Activated B cell treated with CpG ODN at 0.5 μM for 24 hours (primary cell): ENCODE measurements at regions of chr5 and their contacts with region 1.

Region 1: DNA sequence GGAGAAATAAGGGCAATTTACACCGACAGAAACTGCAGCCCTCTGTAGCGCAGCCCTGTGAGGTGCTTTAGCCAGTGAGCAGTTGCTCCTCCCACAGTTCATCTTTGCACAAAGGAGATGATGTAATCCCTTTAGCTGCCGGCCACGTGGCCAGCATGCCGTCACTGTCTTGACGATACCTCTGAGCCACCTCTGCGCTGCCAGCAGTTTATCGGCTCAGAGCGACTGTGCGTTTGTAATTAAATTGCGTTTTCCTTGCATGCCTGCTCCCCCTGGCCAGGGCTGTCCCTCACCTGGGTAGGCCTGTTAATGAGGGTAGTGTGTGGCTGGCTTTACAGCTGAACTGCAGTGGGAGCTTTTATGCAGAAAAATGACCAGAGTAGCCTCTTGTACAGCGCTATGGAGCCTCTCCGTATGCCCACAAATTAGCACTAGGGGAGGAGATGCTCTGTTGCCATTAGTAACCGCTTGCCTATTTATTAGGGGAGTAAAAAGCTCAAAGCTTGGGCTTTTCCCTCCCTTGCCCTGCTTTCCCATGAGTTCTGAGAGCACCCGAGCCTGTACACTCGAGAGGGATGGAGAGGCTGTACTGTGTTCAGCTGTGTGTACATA is 107.0 kb downstream of the TRIO start:
- DNase-seq: no peak
- ATAC-seq: peak; percentile 22
- H3K4me3 Mint-ChIP-seq: peak overlapping the region; percentile 55
- H3K27ac Mint-ChIP-seq: peak overlapping the region; percentile 87
- H3K4me1 Mint-ChIP-seq: peaks cover 89% of the 10 kb centered on the region
- H3K27me3 Mint-ChIP-seq: no peaks in the 10 kb centered on the region
- CTCF ChIP-seq: no peak

Region 2: GRCh38 chr5:14234219-14234618 is 16.0 kb before region 1 on chr5:
- CTCF ChIA-PET with region 1: no interaction called
- POLR2A ChIA-PET with region 1: interaction called, 6 read pairs
- intact Hi-C with region 1: loop called (anchors 2 kb)
- DNase-seq: no peak
- ATAC-seq: no peak
- H3K4me3 Mint-ChIP-seq: no peak overlapping the region
- H3K27ac Mint-ChIP-seq: peak overlapping the region; percentile 32
- H3K4me1 Mint-ChIP-seq: peaks cover 63% of the 10 kb centered on the region
- H3K27me3 Mint-ChIP-seq: no peaks in the 10 kb centered on the region
- CTCF ChIP-seq: no peak

Region 3: DNA sequence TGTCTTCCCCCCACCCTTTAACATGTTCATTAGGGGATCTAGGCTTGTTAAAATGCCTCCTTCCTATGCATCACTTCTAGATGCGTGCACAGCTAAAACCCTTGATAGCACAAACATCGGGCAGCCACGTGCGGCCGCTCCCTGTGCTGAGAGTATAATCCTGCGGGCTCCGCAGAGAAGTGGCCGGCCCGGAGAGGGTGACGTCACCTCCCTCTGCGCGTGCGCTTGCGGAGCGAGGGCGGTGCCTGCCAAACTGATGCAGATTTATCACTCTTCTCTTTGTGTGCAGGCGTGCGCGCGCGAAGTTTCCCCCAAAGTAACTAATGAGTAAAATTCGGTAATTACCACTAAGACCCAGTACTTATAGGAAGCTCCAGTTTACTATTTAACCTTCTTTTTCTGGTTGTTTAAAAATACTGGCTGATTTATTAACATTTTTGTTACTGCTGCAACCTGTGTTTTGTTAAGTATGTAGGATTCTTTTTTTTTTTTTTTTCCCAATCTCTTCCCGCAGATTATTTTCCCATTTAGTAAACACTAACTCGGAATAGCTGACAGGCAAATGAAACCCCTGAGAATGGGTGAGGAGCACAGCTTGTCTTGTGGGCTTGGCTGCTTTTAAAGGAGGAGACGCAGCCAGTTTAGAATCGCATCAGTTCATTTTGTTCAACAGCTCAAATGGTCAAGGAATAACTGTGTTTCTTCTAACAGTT is 14.6 kb after region 1 on chr5:
- CTCF ChIA-PET with region 1: interaction called, 7 read pairs
- POLR2A ChIA-PET with region 1: interaction called, 9 read pairs
- intact Hi-C with region 1: loop called (anchors 2 kb)
- DNase-seq: peak; percentile 79
- ATAC-seq: peak; percentile 98
- H3K4me3 Mint-ChIP-seq: peak overlapping the region; percentile 81
- H3K27ac Mint-ChIP-seq: peak overlapping the region; percentile 69
- H3K4me1 Mint-ChIP-seq: peaks cover 78% of the 10 kb centered on the region
- H3K27me3 Mint-ChIP-seq: no peaks in the 10 kb centered on the region
- CTCF ChIP-seq: no peak

Region 4: GRCh38 chr5:14286574-14287421 is 36.6 kb after region 1 on chr5:
- CTCF ChIA-PET with region 1: no interaction called
- POLR2A ChIA-PET with region 1: interaction called, 6 read pairs
- intact Hi-C with region 1: loop called (anchors 2 kb)
- DNase-seq: peak; percentile 26
- ATAC-seq: peak; percentile 98
- H3K4me3 Mint-ChIP-seq: peak overlapping the region; percentile 54
- H3K27ac Mint-ChIP-seq: peak overlapping the region; percentile 77
- H3K4me1 Mint-ChIP-seq: peaks cover 35% of the 10 kb centered on the region
- H3K27me3 Mint-ChIP-seq: no peaks in the 10 kb centered on the region
- CTCF ChIP-seq: no peak